ENCODE measurements at regions of chr11 and their contacts with region 1.

Region 1: DNA sequence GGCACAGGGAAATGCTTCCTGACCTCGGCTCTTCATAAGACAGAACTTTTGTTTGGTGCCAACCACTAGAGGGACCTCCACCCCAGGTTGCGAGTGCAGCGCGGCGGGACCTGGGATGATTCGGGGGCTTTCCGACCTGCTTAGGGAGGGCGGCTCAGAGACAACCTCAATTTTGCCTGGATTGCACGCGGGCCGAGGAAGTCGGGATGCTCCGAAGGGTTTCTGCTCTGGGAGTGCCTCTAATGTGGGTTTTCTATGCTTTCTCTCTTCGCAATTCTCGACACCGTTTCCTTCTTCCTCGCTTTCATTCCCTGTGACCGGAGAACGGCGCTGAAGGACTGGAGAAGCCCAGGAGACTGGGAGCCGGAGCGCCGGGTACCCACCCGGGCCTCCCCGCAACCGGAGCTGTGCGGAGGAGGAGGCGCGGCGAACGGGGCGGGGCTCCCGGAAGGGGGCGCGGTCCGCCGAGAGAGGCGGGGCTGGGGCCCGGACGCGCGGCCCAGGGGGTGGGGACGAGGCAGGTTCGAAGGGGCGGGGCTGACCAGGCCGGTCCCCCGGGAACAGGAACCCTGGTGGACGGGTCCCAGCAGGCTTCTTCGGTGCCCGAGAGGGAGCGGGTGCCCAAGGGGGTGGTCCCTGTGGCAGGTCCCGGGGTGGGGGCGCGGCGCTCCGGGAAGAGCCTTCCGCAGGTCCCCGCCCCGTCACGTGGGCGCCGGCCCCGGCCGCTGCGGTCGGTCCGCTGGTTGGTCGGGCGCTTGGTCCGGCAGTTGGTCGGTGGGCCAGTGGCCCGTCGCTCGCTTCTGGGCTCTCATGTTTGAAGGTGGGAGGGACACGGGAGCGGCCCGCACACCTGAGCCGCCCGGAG is at the start of gene PPFIBP2:
- DNase-seq: peak; percentile 67 to 91 (median 82)
- ATAC-seq: peak; percentile 84
- H3K4me3 ChIP-seq: peak within 1 kb of the TSS; percentile 93 to 96
- H3K4me3 Mint-ChIP-seq: peak within 1 kb of the TSS; percentile 96
- H3K27ac ChIP-seq: peak within 1 kb of the TSS; percentile 84 to 97
- H3K27ac Mint-ChIP-seq: peak within 1 kb of the TSS; percentile 96
- H3K4me1 ChIP-seq: peaks cover 43% of the 10 kb centered on the region
- H3K4me1 Mint-ChIP-seq: peaks cover 57% of the 10 kb centered on the region
- H3K27me3 ChIP-seq: no peaks in the 10 kb centered on the region
- H3K27me3 Mint-ChIP-seq: no peaks in the 10 kb centered on the region
- CTCF ChIP-seq: peak; percentile 68
- total RNA-seq, gene PPFIBP2: 21.6 to 26.7 TPM

Region 2: DNA sequence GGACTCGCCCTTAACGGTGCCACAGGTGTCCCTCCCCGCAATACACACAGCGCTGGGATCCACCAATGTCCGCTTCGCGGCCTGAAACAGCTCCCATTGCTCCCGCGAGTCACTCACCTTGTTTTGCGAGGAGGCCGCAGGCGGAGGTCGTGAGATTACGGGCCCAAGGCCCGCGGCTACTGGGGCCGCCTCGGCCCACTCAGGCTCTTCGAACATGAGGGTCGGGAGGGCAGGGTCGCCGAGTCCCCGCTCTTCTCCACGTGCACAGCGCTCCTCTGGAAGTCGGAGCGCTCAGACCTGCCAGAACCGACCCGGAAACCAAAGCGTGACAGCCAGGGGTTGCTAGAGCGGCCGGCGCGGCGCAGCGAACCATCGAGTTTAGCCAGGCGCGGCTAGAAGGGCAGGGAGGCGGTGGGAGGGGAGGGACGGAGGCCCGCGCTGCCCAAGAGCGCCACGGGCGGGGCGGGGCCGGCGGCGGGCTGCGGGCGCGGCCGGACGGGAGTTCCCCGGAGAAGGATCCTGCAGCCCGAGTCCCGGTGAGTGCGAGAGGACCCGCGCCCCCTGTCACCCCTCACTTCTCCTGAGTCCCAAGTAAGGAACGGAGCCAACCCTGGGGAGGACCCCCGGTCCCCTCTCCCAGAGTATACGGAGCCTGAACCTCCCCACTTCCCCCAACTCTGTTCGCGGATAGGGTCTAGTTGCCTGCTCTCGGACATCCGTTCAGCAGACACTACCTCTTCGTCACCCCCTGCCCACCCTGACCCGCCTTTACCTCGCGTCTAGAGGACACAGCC is 910.0 kb before region 1 on chr11 and contains the starts of genes ILK and RRP8:
- CTCF ChIA-PET with region 1: no interaction called
- POLR2A ChIA-PET with region 1: no interaction called
- intact Hi-C with region 1: loop called in 1 of 2 experiments (anchors 5 kb)
- DNase-seq: peak; percentile 66 to 92 (median 87)
- ATAC-seq: peak; percentile 78
- H3K4me3 ChIP-seq: peak within 1 kb of the TSS; percentile 93 to 97
- H3K4me3 Mint-ChIP-seq: no peak within 1 kb of the TSS
- H3K27ac ChIP-seq: peak within 1 kb of the TSS; percentile 65 to 88
- H3K27ac Mint-ChIP-seq: no peak within 1 kb of the TSS
- H3K4me1 ChIP-seq: peaks cover 60% of the 10 kb centered on the region
- H3K4me1 Mint-ChIP-seq: peaks cover 40% of the 10 kb centered on the region
- H3K27me3 ChIP-seq: no peaks in the 10 kb centered on the region
- H3K27me3 Mint-ChIP-seq: no peaks in the 10 kb centered on the region
- CTCF ChIP-seq: no peak
- total RNA-seq, gene ILK: 26.6 to 31.6 TPM
- total RNA-seq, gene RRP8: 29.1 to 31.3 TPM

Region 3: GRCh38 chr11:7186676-7187075 is 326.8 kb before region 1 on chr11:
- CTCF ChIA-PET with region 1: no interaction called
- POLR2A ChIA-PET with region 1: no interaction called
- intact Hi-C with region 1: no loop called
- DNase-seq: no peak
- ATAC-seq: no peak
- H3K4me3 ChIP-seq: no peak overlapping the region
- H3K4me3 Mint-ChIP-seq: no peak overlapping the region
- H3K27ac ChIP-seq: no peak overlapping the region
- H3K27ac Mint-ChIP-seq: no peak overlapping the region
- H3K4me1 ChIP-seq: no peaks in the 10 kb centered on the region
- H3K4me1 Mint-ChIP-seq: no peaks in the 10 kb centered on the region
- H3K27me3 ChIP-seq: no peaks in the 10 kb centered on the region
- H3K27me3 Mint-ChIP-seq: peaks cover 9% of the 10 kb centered on the region
- CTCF ChIP-seq: no peak

Region 4: DNA sequence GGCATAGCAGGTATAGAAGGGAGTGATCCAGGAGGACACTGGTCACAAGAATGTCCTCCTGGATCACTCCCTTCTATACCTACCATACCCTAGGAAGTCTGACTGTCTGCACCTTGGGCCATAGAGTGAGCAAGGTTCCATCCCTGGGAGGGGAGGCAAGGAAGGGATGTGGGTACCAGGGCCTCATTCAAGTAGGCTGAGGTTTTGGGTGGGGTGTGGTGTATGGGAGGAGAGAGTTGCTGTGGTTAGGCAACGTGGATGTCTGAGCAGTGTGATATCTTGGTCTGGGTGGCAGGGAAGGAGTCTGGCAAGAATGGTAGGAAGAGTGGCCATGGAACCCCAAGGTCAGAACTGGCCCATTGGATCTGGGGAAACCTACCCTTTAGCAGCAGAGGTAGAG is 13.6 kb after region 1 on chr11:
- CTCF ChIA-PET with region 1: interaction called, 7 read pairs
- POLR2A ChIA-PET with region 1: interaction called, 9 read pairs
- intact Hi-C with region 1: loop called in 1 of 2 experiments (anchors 1 kb)
- DNase-seq: peak in 7 of 9 experiments; percentile 20 to 82 (median 51)
- ATAC-seq: peak; percentile 92
- H3K4me3 ChIP-seq: peak overlapping the region in 1 of 2 experiments; percentile 8
- H3K4me3 Mint-ChIP-seq: peak overlapping the region; percentile 40
- H3K27ac ChIP-seq: no peak overlapping the region
- H3K27ac Mint-ChIP-seq: peak overlapping the region; percentile 85
- H3K4me1 ChIP-seq: peaks cover 74% of the 10 kb centered on the region
- H3K4me1 Mint-ChIP-seq: peaks cover 66% of the 10 kb centered on the region
- H3K27me3 ChIP-seq: no peaks in the 10 kb centered on the region
- H3K27me3 Mint-ChIP-seq: no peaks in the 10 kb centered on the region
- CTCF ChIP-seq: no peak

Region 5: DNA sequence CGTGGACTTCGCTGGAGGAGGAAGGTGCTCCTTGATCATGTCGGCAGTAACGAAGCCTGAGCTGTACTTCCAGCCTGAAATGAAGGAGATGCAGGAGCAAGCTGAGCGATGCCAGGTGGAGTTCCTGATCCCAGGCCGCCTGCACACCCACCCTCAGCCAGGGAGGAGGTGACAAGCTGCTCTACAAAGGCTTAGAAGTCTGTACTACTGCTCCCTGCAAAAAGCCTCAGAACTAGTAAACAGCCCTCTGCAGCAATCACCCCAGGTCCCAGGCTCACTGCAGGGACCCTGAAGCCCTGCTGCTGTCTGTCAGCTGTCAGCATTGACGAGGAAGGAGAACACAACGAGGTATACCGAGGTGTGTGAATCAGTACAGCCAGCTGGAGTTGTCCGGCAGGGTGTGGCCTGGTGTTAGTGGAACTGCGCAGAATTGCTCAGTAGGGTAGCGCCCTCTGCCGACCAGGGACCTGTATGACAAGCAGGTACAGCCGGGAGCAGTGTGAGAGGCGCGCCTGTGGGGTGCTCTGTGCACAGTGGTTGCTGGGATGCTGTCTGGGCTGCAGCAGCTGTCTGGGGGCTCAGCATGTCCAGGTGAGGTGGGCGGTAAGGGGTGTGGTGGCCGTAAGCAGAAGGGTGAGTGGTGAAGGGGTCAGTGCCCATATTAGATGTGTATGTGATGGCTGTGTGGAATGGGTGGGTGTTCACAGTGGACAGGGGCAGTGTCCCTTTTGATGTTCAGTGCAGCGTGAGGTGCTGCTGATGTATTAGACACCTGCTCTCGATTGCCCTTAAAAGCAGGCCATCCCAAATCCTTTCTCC is 152.2 kb after region 1 on chr11:
- CTCF ChIA-PET with region 1: interaction called, 17 read pairs
- POLR2A ChIA-PET with region 1: no interaction called
- intact Hi-C with region 1: loop called (anchors 2 to 5 kb)
- DNase-seq: peak; percentile 36 to 78 (median 62)
- ATAC-seq: peak; percentile 82
- H3K4me3 ChIP-seq: no peak overlapping the region
- H3K4me3 Mint-ChIP-seq: no peak overlapping the region
- H3K27ac ChIP-seq: no peak overlapping the region
- H3K27ac Mint-ChIP-seq: no peak overlapping the region
- H3K4me1 ChIP-seq: no peaks in the 10 kb centered on the region
- H3K4me1 Mint-ChIP-seq: no peaks in the 10 kb centered on the region
- H3K27me3 ChIP-seq: no peaks in the 10 kb centered on the region
- H3K27me3 Mint-ChIP-seq: peaks cover 9% of the 10 kb centered on the region
- CTCF ChIP-seq: peak; percentile 65

Region 6: GRCh38 chr11:7986768-7987559 is 473.5 kb after region 1 on chr11 and contains the start of gene EIF3F:
- CTCF ChIA-PET with region 1: no interaction called
- POLR2A ChIA-PET with region 1: no interaction called
- intact Hi-C with region 1: loop called in 1 of 2 experiments (anchors 5 kb)
- DNase-seq: peak; percentile 79 to 99 (median 88)
- ATAC-seq: peak; percentile 96
- H3K4me3 ChIP-seq: peak within 1 kb of the TSS; percentile 68 to 71
- H3K4me3 Mint-ChIP-seq: peak within 1 kb of the TSS; percentile 95
- H3K27ac ChIP-seq: peak within 1 kb of the TSS; percentile 57 to 84
- H3K27ac Mint-ChIP-seq: peak within 1 kb of the TSS; percentile 97
- H3K4me1 ChIP-seq: peaks cover 32% of the 10 kb centered on the region
- H3K4me1 Mint-ChIP-seq: peaks cover 50% of the 10 kb centered on the region
- H3K27me3 ChIP-seq: no peaks in the 10 kb centered on the region
- H3K27me3 Mint-ChIP-seq: no peaks in the 10 kb centered on the region
- CTCF ChIP-seq: peak; percentile 88
- total RNA-seq, gene EIF3F: 359 to 366 TPM

Region 7: GRCh38 chr11:8018484-8019313 is 505.2 kb after region 1 on chr11:
- CTCF ChIA-PET with region 1: no interaction called
- POLR2A ChIA-PET with region 1: no interaction called
- intact Hi-C with region 1: no loop called
- DNase-seq: peak; percentile 43 to 93 (median 69)
- ATAC-seq: peak; percentile 69
- H3K4me3 ChIP-seq: peak overlapping the region; percentile 54 to 68
- H3K4me3 Mint-ChIP-seq: peak overlapping the region; percentile 81
- H3K27ac ChIP-seq: peak overlapping the region; percentile 39 to 60
- H3K27ac Mint-ChIP-seq: peak overlapping the region; percentile 13
- H3K4me1 ChIP-seq: peaks cover 12% of the 10 kb centered on the region
- H3K4me1 Mint-ChIP-seq: peaks cover 13% of the 10 kb centered on the region
- H3K27me3 ChIP-seq: peaks cover 11 to 17% of the 10 kb centered on the region in 2 experiments
- H3K27me3 Mint-ChIP-seq: peaks cover 34% of the 10 kb centered on the region
- CTCF ChIP-seq: no peak

Measured in CD8-positive, alpha-beta T cell (primary cell).